WTC11 (cell line): ENCODE measurements at regions of chr3 and their contacts with region 1.

Region 1: GRCh38 chr3:98022978-98023820 is 11.9 kb downstream of the GABRR3 start:
- DNase-seq: peak; percentile 93
- ATAC-seq: peak; percentile 72
- H3K4me3 Mint-ChIP-seq: no peak overlapping the region
- H3K27ac Mint-ChIP-seq: no peak overlapping the region
- H3K4me1 Mint-ChIP-seq: peaks cover 4% of the 10 kb centered on the region
- H3K27me3 Mint-ChIP-seq: no peaks in the 10 kb centered on the region
- CTCF ChIP-seq: peak; percentile 98

Region 2: GRCh38 chr3:97821810-97822775 is 201.1 kb before region 1 on chr3 and contains the start of gene CRYBG3:
- CTCF ChIA-PET with region 1: interaction called, 14 read pairs
- POLR2A ChIA-PET with region 1: no interaction called
- DNase-seq: peak; percentile 79
- ATAC-seq: peak; percentile 92
- H3K4me3 Mint-ChIP-seq: peak within 1 kb of the TSS; percentile 99
- H3K27ac Mint-ChIP-seq: peak within 1 kb of the TSS; percentile 43
- H3K4me1 Mint-ChIP-seq: peaks cover 46% of the 10 kb centered on the region
- H3K27me3 Mint-ChIP-seq: peaks cover 29% of the 10 kb centered on the region
- CTCF ChIP-seq: no peak
- total RNA-seq, gene CRYBG3: 12.6 to 13.6 TPM (median 13.3 TPM) in 3 replicates

Region 3: GRCh38 chr3:97959872-97960271 is 63.3 kb before region 1 on chr3:
- CTCF ChIA-PET with region 1: interaction called, 12 read pairs
- POLR2A ChIA-PET with region 1: no interaction called
- DNase-seq: no peak
- ATAC-seq: no peak
- H3K4me3 Mint-ChIP-seq: no peak overlapping the region
- H3K27ac Mint-ChIP-seq: no peak overlapping the region
- H3K4me1 Mint-ChIP-seq: peaks cover 2% of the 10 kb centered on the region; the same call in 1 of the 2 replicates
- H3K27me3 Mint-ChIP-seq: no peaks in the 10 kb centered on the region
- CTCF ChIP-seq: no peak

Region 4: DNA sequence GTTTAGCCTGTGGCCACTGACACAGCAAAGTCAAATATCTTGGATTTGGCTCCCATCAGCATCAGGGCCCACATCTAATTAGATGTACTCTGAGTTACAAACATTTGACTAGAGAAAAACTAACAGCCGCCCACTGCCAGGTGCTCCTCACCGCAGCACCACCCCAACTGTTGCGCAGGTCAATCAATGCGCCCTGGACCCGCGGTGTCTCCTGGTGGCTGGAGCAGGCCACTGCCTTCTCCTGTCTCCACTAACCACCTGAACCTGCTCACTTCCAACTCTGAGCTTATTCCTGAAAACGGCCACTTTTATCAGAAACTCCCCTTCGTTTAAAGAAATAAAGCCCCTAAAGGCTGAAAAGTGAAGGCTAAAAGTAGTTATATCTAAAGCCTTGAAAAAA is 55.2 kb before region 1 on chr3:
- CTCF ChIA-PET with region 1: interaction called, 24 read pairs
- POLR2A ChIA-PET with region 1: no interaction called
- DNase-seq: peak; percentile 52
- ATAC-seq: peak; percentile 79
- H3K4me3 Mint-ChIP-seq: no peak overlapping the region
- H3K27ac Mint-ChIP-seq: no peak overlapping the region
- H3K4me1 Mint-ChIP-seq: peaks cover 22% of the 10 kb centered on the region
- H3K27me3 Mint-ChIP-seq: peaks cover 12% of the 10 kb centered on the region
- CTCF ChIP-seq: no peak

Region 5: GRCh38 chr3:98039322-98040024 is 16.3 kb after region 1 on chr3:
- CTCF ChIA-PET with region 1: interaction called, 11 read pairs
- POLR2A ChIA-PET with region 1: no interaction called
- DNase-seq: peak; percentile 61
- ATAC-seq: peak; percentile 94
- H3K4me3 Mint-ChIP-seq: peak overlapping the region; percentile 92
- H3K27ac Mint-ChIP-seq: peak overlapping the region; percentile 88; the same call in 1 of the 2 replicates
- H3K4me1 Mint-ChIP-seq: peaks cover 7% of the 10 kb centered on the region; the same call in 1 of the 2 replicates
- H3K27me3 Mint-ChIP-seq: no peaks in the 10 kb centered on the region
- CTCF ChIP-seq: peak; percentile 91

Region 6: GRCh38 chr3:98151241-98151640 is 128.0 kb after region 1 on chr3:
- CTCF ChIA-PET with region 1: no interaction called
- POLR2A ChIA-PET with region 1: no interaction called
- DNase-seq: no peak
- ATAC-seq: no peak
- H3K4me3 Mint-ChIP-seq: no peak overlapping the region
- H3K27ac Mint-ChIP-seq: no peak overlapping the region
- H3K4me1 Mint-ChIP-seq: no peaks in the 10 kb centered on the region
- H3K27me3 Mint-ChIP-seq: no peaks in the 10 kb centered on the region
- CTCF ChIP-seq: no peak

Region 7: DNA sequence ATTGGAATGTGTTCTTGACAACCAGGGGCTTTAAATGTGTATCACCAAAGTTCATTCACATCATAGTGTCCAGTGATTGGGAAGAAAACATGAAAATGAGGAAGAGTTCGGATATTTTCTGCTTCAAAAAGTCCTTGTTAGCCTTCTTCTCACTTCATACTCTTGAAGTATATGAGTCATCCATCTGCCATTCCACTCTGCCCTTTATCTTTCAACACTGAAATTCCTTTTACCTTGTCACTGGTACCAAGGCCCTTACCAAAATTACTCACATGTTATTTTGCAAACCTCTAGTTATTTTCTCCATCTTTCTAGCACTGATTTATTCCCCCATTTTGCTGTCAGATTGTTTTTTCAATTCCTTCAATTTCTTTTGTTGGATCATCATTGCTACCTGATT is 175.8 kb after region 1 on chr3:
- CTCF ChIA-PET with region 1: no interaction called
- POLR2A ChIA-PET with region 1: no interaction called
- DNase-seq: no peak
- ATAC-seq: no peak
- H3K4me3 Mint-ChIP-seq: no peak overlapping the region
- H3K27ac Mint-ChIP-seq: no peak overlapping the region
- H3K4me1 Mint-ChIP-seq: peaks cover 13% of the 10 kb centered on the region; the same call in 1 of the 2 replicates
- H3K27me3 Mint-ChIP-seq: no peaks in the 10 kb centered on the region; the same call in 1 of the 2 replicates
- CTCF ChIP-seq: no peak